MCF 10A (cell line): ENCODE measurements at regions of chr5 and their contacts with region 1.

Region 1: DNA sequence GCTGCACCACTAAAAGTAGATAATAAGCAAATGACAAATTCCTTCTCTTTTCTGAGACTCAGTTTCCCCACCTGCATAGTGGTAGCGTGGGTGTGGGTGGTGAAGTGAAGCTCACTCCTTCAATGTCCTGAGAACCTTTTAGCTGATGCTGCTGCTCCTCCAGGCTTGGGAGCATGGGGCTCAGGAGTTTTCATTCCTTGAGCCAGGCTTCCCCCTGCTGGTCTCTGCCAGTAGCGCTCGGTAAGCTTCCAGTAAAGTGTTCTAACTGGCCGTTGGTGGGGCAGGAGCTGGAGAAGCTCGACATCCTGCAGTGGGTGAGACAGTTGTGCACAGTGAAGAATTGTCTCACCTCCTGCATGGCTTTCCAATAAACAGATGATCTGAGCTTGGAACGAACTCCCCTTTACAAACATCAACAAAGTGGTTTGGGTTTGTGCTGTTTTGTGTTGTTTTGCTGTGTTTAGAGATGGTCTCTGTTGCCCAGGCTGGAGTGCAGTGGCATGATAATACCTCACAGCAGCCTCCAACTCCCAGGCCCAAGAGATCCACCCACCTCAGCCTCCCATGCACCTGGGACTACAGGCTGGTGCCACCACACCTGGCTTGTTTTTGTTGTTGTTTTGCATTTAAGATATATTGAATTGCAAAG is 34.6 kb downstream of the SPARC start:
- DNase-seq: peak; percentile 94
- H3K4me3 Mint-ChIP-seq: no peak overlapping the region
- H3K27ac Mint-ChIP-seq: no peak overlapping the region
- H3K4me1 Mint-ChIP-seq: peaks cover 10% of the 10 kb centered on the region
- H3K27me3 Mint-ChIP-seq: no peaks in the 10 kb centered on the region
- CTCF ChIP-seq: peak; percentile 99

Region 2: DNA sequence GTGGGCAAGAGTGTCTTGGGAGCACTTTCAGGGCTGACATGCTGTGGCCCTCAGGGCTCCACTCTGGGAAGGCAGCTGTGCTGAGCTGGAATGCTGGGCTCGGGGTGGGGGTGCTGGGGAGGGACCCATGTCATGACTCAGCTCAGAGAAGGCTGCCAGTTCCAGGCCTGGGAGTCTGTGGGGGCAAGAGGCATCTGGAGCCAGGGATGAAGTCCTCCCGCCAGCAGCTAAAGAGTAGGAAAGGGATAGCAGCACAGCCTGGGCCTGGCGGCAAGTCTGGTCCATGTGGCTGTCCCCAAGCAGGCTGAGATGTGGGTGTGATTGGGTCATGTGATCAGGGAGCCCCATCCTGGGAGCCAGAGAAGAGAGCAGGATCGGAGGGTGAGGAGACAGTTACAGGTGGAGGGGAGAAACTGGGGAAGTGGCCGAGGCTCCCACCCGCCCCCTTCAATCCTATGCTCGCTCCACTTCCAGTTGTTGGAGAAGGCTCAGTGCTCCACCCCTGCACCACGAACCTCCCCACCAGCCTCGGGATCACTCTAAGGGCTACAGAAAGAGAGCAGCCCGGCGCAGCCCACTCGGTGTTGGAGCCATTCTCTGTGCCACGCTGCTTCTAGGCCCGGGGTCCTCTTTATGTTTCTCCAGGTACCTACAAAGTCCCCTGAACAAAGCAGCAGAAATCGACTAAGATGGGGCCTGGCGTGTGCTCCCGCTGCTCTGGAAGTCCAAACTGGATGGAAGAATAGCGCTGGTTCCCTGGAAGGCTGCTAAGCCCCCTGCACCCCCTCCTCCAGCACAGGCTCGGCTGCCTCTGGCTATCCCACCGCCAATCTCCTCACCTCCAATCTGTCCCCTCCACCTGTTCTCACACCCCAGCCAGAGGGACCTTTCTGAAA is 1508.5 kb before region 1 on chr5:
- CTCF ChIA-PET with region 1: no interaction called
- POLR2A ChIA-PET with region 1: no interaction called
- intact Hi-C with region 1: no loop called
- DNase-seq: peak; percentile 96
- H3K4me3 Mint-ChIP-seq: peak overlapping the region; percentile 35
- H3K27ac Mint-ChIP-seq: peak overlapping the region; percentile 89
- H3K4me1 Mint-ChIP-seq: peaks cover 42% of the 10 kb centered on the region
- H3K27me3 Mint-ChIP-seq: no peaks in the 10 kb centered on the region
- CTCF ChIP-seq: no peak

Region 3: DNA sequence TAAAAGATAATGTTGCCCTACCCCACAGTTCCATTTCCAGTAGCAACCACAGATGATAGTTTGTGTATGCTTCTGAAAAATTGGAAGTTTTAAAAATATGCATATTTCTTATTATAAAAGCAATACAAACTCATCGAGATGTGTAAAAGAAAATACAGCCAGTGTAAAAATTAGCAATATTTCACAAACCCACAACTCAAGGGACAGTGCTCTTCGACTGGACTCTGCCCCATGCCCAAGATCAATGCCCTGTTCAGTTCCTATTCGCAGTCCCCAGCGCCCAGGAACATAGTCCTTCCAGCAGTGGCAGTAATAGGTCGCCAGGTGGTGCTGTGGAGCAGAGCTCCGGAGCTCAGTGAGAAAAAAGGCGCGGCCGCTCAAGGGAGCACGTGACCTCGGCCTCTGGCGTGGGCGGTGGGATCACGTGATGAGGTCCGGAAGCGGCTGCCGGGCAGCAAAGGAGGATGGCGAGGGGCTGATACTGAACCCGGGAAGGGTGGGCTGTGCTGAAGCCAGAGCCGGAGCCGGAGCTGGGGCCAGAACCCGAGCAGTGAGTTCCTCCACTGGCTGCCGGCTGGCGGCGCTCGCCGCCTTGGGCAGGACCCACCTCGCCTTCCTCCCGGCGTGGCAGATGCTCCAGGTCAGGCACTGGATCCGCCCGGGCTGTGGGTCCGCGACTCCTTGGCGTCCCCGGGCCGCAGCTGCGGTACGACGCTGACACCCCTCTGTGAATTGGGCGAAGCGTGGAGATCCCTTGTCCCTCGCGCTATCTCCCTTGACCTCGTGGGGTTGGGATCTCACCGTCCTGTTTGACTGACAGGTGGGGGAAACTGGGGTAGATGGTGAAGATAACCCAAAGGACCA is 204.7 kb before region 1 on chr5 and contains the start of gene SLC36A1:
- CTCF ChIA-PET with region 1: interaction called, 170 read pairs
- POLR2A ChIA-PET with region 1: interaction called, 21 read pairs
- intact Hi-C with region 1: loop called (anchors 1 kb)
- DNase-seq: peak; percentile 97
- H3K4me3 Mint-ChIP-seq: peak within 1 kb of the TSS; percentile 77
- H3K27ac Mint-ChIP-seq: peak within 1 kb of the TSS; percentile 66
- H3K4me1 Mint-ChIP-seq: peaks cover 19% of the 10 kb centered on the region
- H3K27me3 Mint-ChIP-seq: peaks cover 28% of the 10 kb centered on the region
- CTCF ChIP-seq: peak; percentile 97
- total RNA-seq, gene SLC36A1: 10.4 and 16.2 TPM in 2 replicates

Region 4: DNA sequence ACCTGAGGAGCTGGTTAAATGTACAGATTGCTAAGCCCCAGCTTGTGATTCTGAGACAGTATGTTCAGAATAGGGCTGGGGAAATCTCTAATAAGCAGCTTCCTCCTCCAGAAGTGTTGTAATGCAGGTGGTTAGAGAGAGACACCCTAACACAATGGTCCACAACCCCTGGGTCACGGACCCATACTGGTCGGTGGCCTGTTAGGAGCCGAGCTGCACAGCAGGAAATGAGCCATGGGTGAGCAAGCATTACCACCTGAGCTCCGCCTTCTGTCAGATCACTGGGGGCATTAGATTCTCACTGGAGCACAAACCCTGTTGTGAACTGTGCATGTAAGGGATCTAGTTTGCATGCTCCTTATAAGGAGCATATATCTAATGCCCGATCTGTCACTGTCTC is 142.9 kb before region 1 on chr5:
- CTCF ChIA-PET with region 1: interaction called, 26 read pairs
- POLR2A ChIA-PET with region 1: no interaction called
- intact Hi-C with region 1: no loop called
- DNase-seq: peak; percentile 32
- H3K4me3 Mint-ChIP-seq: no peak overlapping the region
- H3K27ac Mint-ChIP-seq: no peak overlapping the region
- H3K4me1 Mint-ChIP-seq: no peaks in the 10 kb centered on the region
- H3K27me3 Mint-ChIP-seq: no peaks in the 10 kb centered on the region
- CTCF ChIP-seq: no peak

Region 5: DNA sequence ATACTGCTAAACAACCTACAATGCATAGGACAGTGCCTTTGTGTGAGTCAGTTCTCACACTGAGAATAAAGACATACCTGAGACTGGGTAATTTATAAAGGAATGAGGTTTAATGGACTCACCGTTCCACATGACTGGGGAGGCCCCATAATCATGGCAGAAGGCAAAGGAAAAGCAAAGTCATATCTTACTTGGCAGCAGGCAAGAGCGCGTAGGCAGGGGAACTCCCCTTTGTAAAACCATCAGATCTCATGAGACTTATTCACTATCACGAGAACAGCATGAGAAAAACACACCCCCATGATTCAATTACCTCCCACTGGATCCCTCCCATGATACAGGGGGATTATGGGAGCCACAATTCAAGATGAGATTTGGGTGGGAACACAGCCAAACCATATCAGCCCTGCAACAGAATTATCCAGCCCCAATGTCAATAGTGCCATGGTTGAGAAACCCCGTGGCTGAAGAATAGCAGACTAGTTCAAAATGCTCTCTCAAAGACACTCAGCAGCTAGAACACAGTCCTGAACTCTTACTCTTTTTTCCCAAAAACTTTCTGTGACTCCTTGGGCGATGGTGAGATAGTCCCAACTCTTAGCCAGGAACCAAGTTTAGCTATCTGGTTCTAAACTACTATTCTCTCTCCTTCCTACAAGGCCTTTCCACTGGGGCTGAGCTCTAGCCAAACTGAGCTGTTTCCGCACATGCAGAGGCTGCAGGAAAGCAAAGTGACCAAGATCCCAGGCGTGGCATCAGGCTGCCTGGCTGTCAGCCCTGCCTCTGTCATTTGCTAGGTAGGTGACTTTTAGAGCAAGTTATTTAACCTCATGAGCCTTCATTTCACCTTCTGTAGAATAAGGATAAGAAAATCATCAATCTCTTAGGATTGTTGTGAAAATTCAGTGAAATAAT is 82.7 kb before region 1 on chr5:
- CTCF ChIA-PET with region 1: interaction called, 467 read pairs
- POLR2A ChIA-PET with region 1: interaction called, 29 read pairs
- intact Hi-C with region 1: loop called (anchors 2 kb)
- DNase-seq: peak; percentile 42
- H3K4me3 Mint-ChIP-seq: no peak overlapping the region
- H3K27ac Mint-ChIP-seq: peak overlapping the region; percentile 57
- H3K4me1 Mint-ChIP-seq: peaks cover 54% of the 10 kb centered on the region
- H3K27me3 Mint-ChIP-seq: no peaks in the 10 kb centered on the region
- CTCF ChIP-seq: no peak

Region 6: DNA sequence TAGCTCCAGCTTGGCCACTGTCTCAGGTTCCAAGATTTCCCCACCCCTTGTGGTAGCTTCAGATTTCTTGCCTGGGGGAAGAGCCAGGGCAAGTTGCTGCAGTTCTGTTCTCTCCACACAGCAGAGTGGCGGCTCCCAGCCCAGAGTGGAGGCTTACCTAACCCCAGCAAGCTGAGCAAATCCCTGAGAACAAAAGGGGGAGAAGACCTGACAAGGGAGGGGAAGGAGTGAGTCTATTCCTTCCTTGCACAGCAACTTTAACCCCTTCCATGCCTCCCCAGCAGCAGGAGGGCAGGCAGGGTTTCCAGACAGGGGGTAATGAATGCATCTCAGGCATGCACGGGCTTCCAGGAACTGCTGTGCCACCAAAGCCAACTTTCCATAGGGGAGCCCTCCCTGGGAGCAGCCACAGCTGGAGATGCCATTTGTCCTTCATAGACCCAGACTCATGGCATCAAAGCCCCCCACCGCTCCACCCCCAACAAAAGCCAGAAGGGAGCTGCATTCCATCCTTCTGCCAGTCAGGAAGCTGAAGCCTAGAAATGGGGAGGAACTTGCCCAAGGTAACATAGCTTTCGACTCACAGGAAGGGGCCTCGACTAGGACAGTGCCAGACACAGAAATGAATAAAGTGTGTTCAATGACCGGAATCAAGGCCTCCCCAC is 32.2 kb before region 1 on chr5:
- CTCF ChIA-PET with region 1: interaction called, 174 read pairs
- POLR2A ChIA-PET with region 1: interaction called, 47 read pairs
- intact Hi-C with region 1: no loop called
- DNase-seq: peak; percentile 99
- H3K4me3 Mint-ChIP-seq: no peak overlapping the region
- H3K27ac Mint-ChIP-seq: peak overlapping the region; percentile 28
- H3K4me1 Mint-ChIP-seq: peaks cover 81% of the 10 kb centered on the region
- H3K27me3 Mint-ChIP-seq: no peaks in the 10 kb centered on the region
- CTCF ChIP-seq: no peak

Region 7: DNA sequence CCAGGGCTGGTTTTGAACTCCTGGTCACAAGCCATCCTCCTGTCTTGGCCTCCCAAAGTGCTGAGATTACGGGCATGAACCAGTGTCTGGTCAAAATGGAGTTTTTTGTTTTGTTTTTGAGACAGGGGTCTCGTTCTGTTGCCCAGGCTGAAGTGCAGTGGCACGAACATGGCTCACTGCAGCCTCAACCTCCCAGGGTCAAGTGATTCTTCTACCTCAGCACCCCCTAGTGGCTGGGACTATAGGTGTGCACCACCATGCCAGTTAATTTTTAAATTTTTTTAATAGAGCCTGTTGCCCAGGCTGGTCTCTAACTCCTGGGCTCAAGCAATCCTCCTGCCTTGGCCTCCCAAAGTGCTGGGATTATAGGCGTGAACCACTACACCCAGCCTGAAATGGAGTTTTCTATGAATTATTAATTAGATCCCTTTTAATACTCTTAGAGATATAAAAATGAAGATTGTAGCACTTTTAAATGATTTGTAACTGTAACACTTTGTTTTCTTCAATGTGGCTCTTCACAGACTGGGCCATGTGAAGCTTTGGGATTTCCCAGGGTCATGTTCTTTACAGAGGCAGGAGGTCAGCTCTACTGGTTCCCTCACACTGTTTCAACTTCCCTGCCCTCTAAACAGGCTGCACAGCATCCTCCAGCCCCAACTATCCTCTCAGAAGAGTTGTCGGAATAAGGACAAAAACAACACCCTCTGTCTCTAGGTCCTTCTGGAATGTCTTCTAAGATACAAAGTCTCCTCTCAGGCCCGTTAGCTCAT is 67.3 kb after region 1 on chr5:
- CTCF ChIA-PET with region 1: interaction called, 31 read pairs
- POLR2A ChIA-PET with region 1: no interaction called
- intact Hi-C with region 1: no loop called
- DNase-seq: peak; percentile 82
- H3K4me3 Mint-ChIP-seq: no peak overlapping the region
- H3K27ac Mint-ChIP-seq: no peak overlapping the region
- H3K4me1 Mint-ChIP-seq: no peaks in the 10 kb centered on the region
- H3K27me3 Mint-ChIP-seq: no peaks in the 10 kb centered on the region
- CTCF ChIP-seq: peak; percentile 72